Naive thymus-derived CD4-positive, alpha-beta T cell (primary cell): ENCODE measurements at regions of chr6 and their contacts with region 1.

Region 1: GRCh38 chr6:35624341-35625070 is 64.2 kb downstream of the FKBP5 start:
- DNase-seq: peak in 7 of 9 donors; percentile 40 to 75 (median 70)
- ATAC-seq: peak; percentile 88
- H3K4me3 ChIP-seq: no peak overlapping the region
- H3K4me3 Mint-ChIP-seq: peak overlapping the region in 9 of 10 donors; percentile 11 to 49 (median 34)
- H3K27ac ChIP-seq: peak overlapping the region; percentile 66
- H3K27ac Mint-ChIP-seq: peak overlapping the region; percentile 64 to 93 (median 90)
- H3K4me1 ChIP-seq: peaks cover 5 to 35% of the 10 kb centered on the region in 2 donors
- H3K4me1 Mint-ChIP-seq: peaks cover 13 to 66% (median 55%) of the 10 kb centered on the region in 7 donors
- H3K27me3 ChIP-seq: no peaks in the 10 kb centered on the region
- H3K27me3 Mint-ChIP-seq: no peaks in the 10 kb centered on the region

Region 2: GRCh38 chr6:35576682-35577081 is 47.8 kb before region 1 on chr6:
- CTCF ChIA-PET with region 1: interaction called, 364 read pairs
- POLR2A ChIA-PET with region 1: interaction called, 54 read pairs
- intact Hi-C with region 1: no loop called
- DNase-seq: no peak
- ATAC-seq: no peak
- H3K4me3 ChIP-seq: no peak overlapping the region
- H3K4me3 Mint-ChIP-seq: no peak overlapping the region
- H3K27ac ChIP-seq: no peak overlapping the region
- H3K27ac Mint-ChIP-seq: peak overlapping the region in 6 of 9 donors; percentile 43 to 72 (median 66)
- H3K4me1 ChIP-seq: peaks cover 0 to 4% of the 10 kb centered on the region in 2 donors
- H3K4me1 Mint-ChIP-seq: peaks cover 1 to 28% (median 14%) of the 10 kb centered on the region in 7 donors
- H3K27me3 ChIP-seq: no peaks in the 10 kb centered on the region
- H3K27me3 Mint-ChIP-seq: no peaks in the 10 kb centered on the region

Region 3: GRCh38 chr6:35583893-35584688 is 40.4 kb before region 1 on chr6:
- CTCF ChIA-PET with region 1: interaction called, 364 read pairs
- POLR2A ChIA-PET with region 1: interaction called, 54 read pairs
- intact Hi-C with region 1: loop called (anchors 1 kb)
- DNase-seq: peak; percentile 43 to 81 (median 75)
- ATAC-seq: peak; percentile 84
- H3K4me3 ChIP-seq: no peak overlapping the region
- H3K4me3 Mint-ChIP-seq: peak overlapping the region in 8 of 10 donors; percentile 16 to 62 (median 46)
- H3K27ac ChIP-seq: peak overlapping the region; percentile 16
- H3K27ac Mint-ChIP-seq: peak overlapping the region; percentile 38 to 94 (median 92)
- H3K4me1 ChIP-seq: peaks cover 7 to 57% of the 10 kb centered on the region in 2 donors
- H3K4me1 Mint-ChIP-seq: peaks cover 31 to 92% (median 79%) of the 10 kb centered on the region in 7 donors
- H3K27me3 ChIP-seq: no peaks in the 10 kb centered on the region
- H3K27me3 Mint-ChIP-seq: no peaks in the 10 kb centered on the region

Region 4: DNA sequence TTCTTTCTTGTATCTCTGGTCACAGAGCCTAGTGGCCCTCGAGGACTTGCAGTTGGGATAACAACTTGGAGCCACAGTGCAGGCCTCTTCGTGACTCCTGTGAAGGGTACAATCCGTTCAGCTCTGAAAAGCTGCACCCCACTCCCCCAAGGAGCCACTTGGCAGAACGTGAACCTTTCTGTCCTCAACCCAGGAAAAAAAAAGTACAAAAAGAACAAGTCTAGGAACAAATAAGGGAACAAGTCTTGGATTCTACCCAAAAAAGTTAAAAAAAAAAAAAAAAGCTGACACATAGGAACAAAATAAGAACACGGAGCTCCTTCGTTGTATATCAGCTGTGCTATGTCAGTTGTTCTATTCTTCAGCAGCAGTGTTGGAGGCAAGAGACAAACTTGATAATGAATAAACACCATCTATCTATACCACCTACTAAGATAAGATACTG is 33.9 kb before region 1 on chr6:
- CTCF ChIA-PET with region 1: interaction called, 364 read pairs
- POLR2A ChIA-PET with region 1: interaction called, 402 read pairs
- intact Hi-C with region 1: no loop called
- DNase-seq: no peak
- ATAC-seq: no peak
- H3K4me3 ChIP-seq: no peak overlapping the region
- H3K4me3 Mint-ChIP-seq: peak overlapping the region in 7 of 10 donors; percentile 1 to 80 (median 64)
- H3K27ac ChIP-seq: peak overlapping the region; percentile 56
- H3K27ac Mint-ChIP-seq: peak overlapping the region in 8 of 9 donors; percentile 70 to 95 (median 92)
- H3K4me1 ChIP-seq: peaks cover 26 to 94% of the 10 kb centered on the region in 2 donors
- H3K4me1 Mint-ChIP-seq: peaks cover 48 to 99% (median 91%) of the 10 kb centered on the region in 7 donors
- H3K27me3 ChIP-seq: no peaks in the 10 kb centered on the region
- H3K27me3 Mint-ChIP-seq: no peaks in the 10 kb centered on the region